ENCODE measurements at regions of chr10 and their contacts with region 1.

Region 1: GRCh38 chr10:124388823-124389612 is 29.7 kb downstream of the OAT start:
- DNase-seq: peak; percentile 93
- ATAC-seq: peak; percentile 82
- H3K4me3 Mint-ChIP-seq: peak overlapping the region; percentile 53
- H3K27ac Mint-ChIP-seq: no peak overlapping the region
- H3K4me1 Mint-ChIP-seq: peaks cover 17% of the 10 kb centered on the region
- H3K27me3 Mint-ChIP-seq: peaks cover 10% of the 10 kb centered on the region
- CTCF ChIP-seq: peak; percentile 92

Region 2: GRCh38 chr10:124005091-124005490 is 383.9 kb before region 1 on chr10:
- CTCF ChIA-PET with region 1: no interaction called
- POLR2A ChIA-PET with region 1: no interaction called
- DNase-seq: no peak
- ATAC-seq: no peak
- H3K4me3 Mint-ChIP-seq: no peak overlapping the region
- H3K27ac Mint-ChIP-seq: no peak overlapping the region
- H3K4me1 Mint-ChIP-seq: peaks cover 6% of the 10 kb centered on the region; the same call in 1 of the 2 replicates
- H3K27me3 Mint-ChIP-seq: no peaks in the 10 kb centered on the region
- CTCF ChIP-seq: no peak

Region 3: GRCh38 chr10:124193309-124193696 is 195.7 kb before region 1 on chr10:
- CTCF ChIA-PET with region 1: interaction called, 11 read pairs
- POLR2A ChIA-PET with region 1: no interaction called
- DNase-seq: no peak
- ATAC-seq: no peak
- H3K4me3 Mint-ChIP-seq: no peak overlapping the region
- H3K27ac Mint-ChIP-seq: no peak overlapping the region
- H3K4me1 Mint-ChIP-seq: peaks cover 7% of the 10 kb centered on the region
- H3K27me3 Mint-ChIP-seq: peaks cover 5% of the 10 kb centered on the region
- CTCF ChIP-seq: no peak

Region 4: DNA sequence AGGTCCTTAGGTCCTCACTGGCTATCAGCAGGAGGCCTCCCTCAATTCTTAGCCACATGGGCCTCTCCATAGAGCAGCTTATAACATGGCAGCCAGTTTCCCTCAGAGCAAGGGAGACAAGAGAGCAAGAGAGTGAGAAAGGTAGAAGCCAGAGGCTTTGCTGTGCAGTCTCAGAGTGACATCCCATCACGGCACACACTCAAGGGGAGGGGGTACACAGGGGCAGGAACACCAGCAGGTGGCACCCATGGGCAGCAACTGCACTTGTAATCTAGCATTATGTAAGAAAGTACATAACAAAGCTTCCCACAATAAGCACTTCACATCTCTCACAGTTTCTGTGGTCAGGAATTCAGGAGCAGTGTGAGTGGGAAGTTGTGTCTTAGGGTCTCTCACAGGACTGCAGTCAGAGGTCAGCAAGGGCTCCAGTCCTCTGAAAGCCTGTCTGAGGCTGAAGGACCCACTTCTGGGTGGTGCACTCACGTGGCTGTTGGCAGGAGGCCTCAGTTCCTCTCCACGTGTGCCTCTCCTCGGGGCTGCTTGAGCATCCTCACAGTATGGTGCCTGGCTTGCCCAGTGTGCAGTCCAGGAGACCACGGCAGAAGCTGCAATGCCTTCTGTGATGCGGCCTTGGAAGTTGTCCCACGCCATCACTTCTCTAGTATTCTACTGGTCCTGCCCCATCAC is 129.7 kb before region 1 on chr10:
- CTCF ChIA-PET with region 1: interaction called, 18 read pairs
- POLR2A ChIA-PET with region 1: no interaction called
- DNase-seq: peak; percentile 51
- ATAC-seq: peak; percentile 71
- H3K4me3 Mint-ChIP-seq: no peak overlapping the region
- H3K27ac Mint-ChIP-seq: no peak overlapping the region
- H3K4me1 Mint-ChIP-seq: no peaks in the 10 kb centered on the region
- H3K27me3 Mint-ChIP-seq: peaks cover 5% of the 10 kb centered on the region; the same call in 1 of the 2 replicates
- CTCF ChIP-seq: no peak

Region 5: GRCh38 chr10:124296121-124296812 is 92.8 kb before region 1 on chr10:
- CTCF ChIA-PET with region 1: interaction called, 51 read pairs
- POLR2A ChIA-PET with region 1: no interaction called
- DNase-seq: peak; percentile 44
- ATAC-seq: peak; percentile 63
- H3K4me3 Mint-ChIP-seq: no peak overlapping the region
- H3K27ac Mint-ChIP-seq: no peak overlapping the region
- H3K4me1 Mint-ChIP-seq: no peaks in the 10 kb centered on the region
- H3K27me3 Mint-ChIP-seq: peaks cover 7% of the 10 kb centered on the region
- CTCF ChIP-seq: no peak

Region 6: GRCh38 chr10:124354411-124355382 is 34.3 kb before region 1 on chr10:
- CTCF ChIA-PET with region 1: interaction called, 16 read pairs
- POLR2A ChIA-PET with region 1: no interaction called
- DNase-seq: no peak
- ATAC-seq: peak; percentile 46
- H3K4me3 Mint-ChIP-seq: peak overlapping the region; percentile 11; the same call in 1 of the 2 replicates
- H3K27ac Mint-ChIP-seq: no peak overlapping the region
- H3K4me1 Mint-ChIP-seq: peaks cover 20% of the 10 kb centered on the region
- H3K27me3 Mint-ChIP-seq: no peaks in the 10 kb centered on the region; the same call in none of the 2 replicates
- CTCF ChIP-seq: no peak

Region 7: DNA sequence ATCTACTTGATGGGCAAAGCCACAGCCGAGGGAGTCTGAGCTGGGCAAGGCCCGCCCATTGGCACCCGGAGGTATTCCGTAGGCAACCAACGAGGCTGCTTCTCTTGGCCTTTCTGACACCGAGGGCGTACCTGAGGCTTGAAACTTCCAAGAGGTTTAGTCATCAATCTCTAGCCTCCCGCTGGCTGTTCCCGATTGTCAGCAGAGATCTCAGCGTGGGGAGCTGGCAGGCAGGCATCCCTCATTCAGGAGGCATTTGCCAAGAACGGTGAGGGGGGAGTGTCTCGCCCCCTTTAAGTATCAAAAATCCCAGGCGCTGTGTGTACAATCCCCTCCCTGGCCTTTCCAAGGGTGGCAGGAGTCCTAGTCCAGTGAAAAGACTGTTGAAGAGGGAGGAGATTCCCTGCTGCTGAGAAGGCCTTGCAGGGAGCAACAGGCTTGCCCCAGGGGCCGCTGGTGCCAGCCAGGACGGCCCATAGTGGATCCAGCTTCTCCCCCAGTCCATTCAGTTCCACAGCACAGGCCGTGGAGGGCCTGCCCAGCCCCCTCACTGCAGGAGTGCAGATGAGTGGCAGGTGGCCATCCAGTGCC is 10.0 kb before region 1 on chr10:
- CTCF ChIA-PET with region 1: interaction called, 18 read pairs
- POLR2A ChIA-PET with region 1: no interaction called
- DNase-seq: no peak
- ATAC-seq: no peak; the same call in 1 of the 2 replicates
- H3K4me3 Mint-ChIP-seq: no peak overlapping the region
- H3K27ac Mint-ChIP-seq: no peak overlapping the region
- H3K4me1 Mint-ChIP-seq: peaks cover 21% of the 10 kb centered on the region
- H3K27me3 Mint-ChIP-seq: peaks cover 5% of the 10 kb centered on the region; the same call in 1 of the 2 replicates
- CTCF ChIP-seq: no peak

Region 8: DNA sequence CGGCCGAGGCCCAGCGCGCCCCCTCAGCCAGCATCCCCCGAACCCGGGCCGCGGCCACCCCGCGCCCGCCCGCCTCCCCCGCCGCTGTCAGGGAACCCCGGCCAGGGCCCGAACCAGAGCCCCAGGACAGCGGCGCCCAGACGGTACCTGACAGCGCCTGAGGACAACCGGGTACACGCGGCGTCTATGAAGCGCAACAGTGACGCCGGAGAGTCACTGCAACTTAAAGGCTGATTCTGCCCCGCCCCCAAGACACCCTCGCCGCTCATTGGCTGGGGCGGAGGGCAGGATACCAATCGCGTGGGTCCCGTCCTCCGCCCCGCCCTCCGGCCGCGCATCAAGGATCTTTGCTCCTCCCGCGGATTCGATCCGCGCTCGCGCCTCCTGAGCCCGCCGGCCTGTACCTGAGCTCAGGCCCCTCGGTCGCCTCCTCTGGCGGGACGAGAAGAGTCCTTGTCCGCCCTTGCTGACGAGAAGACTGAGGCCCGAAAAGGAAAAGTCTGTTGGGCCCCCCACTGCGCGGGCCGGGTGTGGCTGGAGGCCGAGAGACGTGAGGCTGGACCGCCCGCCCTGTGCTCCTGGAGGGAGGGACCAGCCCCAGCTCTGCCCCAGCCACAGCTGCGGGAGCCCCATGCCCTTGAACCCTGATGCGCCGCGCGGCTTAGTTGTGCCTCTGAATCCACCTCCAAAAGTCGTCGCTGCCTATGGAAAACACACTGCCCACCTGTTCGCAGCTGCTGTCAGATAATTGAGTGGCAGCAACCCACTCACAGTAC is 29.9 kb after region 1 on chr10 and contains the start of gene OAT:
- CTCF ChIA-PET with region 1: interaction called, 17 read pairs
- POLR2A ChIA-PET with region 1: no interaction called
- DNase-seq: peak; percentile 99
- ATAC-seq: peak; percentile 97
- H3K4me3 Mint-ChIP-seq: peak within 1 kb of the TSS; percentile 81
- H3K27ac Mint-ChIP-seq: peak within 1 kb of the TSS; percentile 95
- H3K4me1 Mint-ChIP-seq: peaks cover 51% of the 10 kb centered on the region
- H3K27me3 Mint-ChIP-seq: peaks cover 18% of the 10 kb centered on the region
- CTCF ChIP-seq: no peak
- total RNA-seq, gene OAT: 96.1 to 117 TPM (median 97.4 TPM) in 3 replicates